ENCODE measurements at regions of chr5 and their contacts with region 1.

Region 1: DNA sequence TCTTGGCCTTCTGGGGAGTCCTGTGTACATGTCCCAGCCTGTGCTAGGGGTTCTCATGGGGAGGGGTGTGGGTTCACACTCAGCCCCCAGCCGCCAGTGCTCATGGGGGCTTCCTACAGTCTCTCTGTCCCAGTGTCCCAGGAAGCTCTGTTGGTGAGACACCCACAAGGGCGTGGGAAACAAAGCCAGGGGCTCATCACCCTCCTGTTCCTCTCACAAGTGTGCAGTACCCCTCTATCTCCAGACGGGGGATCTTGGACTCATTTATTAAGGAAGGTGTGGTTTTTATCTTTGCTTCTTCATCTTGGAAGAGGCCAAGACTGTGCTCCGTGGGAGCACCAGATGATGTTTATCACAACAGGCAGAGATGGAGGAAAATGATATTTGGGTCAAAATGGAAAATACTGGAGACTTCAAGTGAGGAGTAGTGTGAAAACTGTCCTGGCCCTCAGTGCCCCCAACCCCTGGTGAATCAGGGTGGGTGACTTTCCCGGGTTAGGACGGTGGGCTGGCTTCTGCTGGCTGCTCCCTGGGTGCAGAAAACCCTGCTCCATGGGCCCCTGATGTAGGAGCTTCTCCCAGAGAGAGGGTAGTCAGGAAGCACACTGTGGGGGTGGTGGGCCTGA is 15.2 kb downstream of the TMEM171 start:
- DNase-seq: no peak
- H3K4me3 ChIP-seq: no peak overlapping the region
- H3K27ac ChIP-seq: no peak overlapping the region
- H3K4me1 ChIP-seq: peaks cover 0 to 10% (median 3%) of the 10 kb centered on the region in 4 experiments; a peak in 3 of 7 replicates
- H3K27me3 ChIP-seq: no peaks in the 10 kb centered on the region; a peak in 1 of 7 replicates
- CTCF ChIP-seq: peak in 2 of 3 experiments; percentile 38 to 42; a peak in 2 of 4 replicates
- EP300 ChIP-seq: no peak
- POLR2A ChIP-seq: no peak
- RAD21 ChIP-seq: peak; percentile 41 to 49

Region 2: DNA sequence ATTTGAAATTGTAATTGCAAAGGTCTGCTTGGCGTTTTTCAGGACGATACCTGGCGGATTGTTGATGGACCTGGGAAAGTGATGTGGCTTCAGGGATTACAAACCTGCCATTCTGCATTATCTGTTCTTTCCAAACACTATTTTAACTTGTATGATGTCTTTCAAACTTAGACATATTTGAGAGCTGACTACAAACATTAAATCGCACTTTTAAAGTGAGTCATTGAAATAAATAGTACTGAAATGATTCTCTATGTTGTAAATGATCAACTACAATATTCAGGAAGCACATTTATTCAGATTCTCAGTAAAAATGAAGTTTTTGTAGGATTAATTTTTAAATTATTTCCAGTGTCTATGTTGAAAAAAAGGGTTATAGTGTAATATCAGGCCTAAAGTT is 47.5 kb before region 1 on chr5:
- CTCF ChIA-PET with region 1: interaction called, 11 read pairs
- POLR2A ChIA-PET with region 1: no interaction called
- DNase-seq: no peak
- H3K4me3 ChIP-seq: no peak overlapping the region
- H3K27ac ChIP-seq: no peak overlapping the region
- H3K4me1 ChIP-seq: no peaks in the 10 kb centered on the region
- H3K27me3 ChIP-seq: no peaks in the 10 kb centered on the region
- CTCF ChIP-seq: no peak
- EP300 ChIP-seq: no peak
- POLR2A ChIP-seq: no peak
- RAD21 ChIP-seq: no peak

Region 3: GRCh38 chr5:73122875-73123810 is 12.4 kb before region 1 on chr5:
- CTCF ChIA-PET with region 1: interaction called, 24 read pairs
- POLR2A ChIA-PET with region 1: interaction called, 7 read pairs
- DNase-seq: peak in 1 of 2 experiments; percentile 57
- H3K4me3 ChIP-seq: no peak overlapping the region
- H3K27ac ChIP-seq: no peak overlapping the region
- H3K4me1 ChIP-seq: peaks cover 0 to 3% (median 1%) of the 10 kb centered on the region in 4 experiments; a peak in 5 of 7 replicates
- H3K27me3 ChIP-seq: peaks cover 0 to 43% (median 30%) of the 10 kb centered on the region in 4 experiments; a peak in 6 of 7 replicates
- CTCF ChIP-seq: no peak
- EP300 ChIP-seq: no peak
- POLR2A ChIP-seq: no peak
- RAD21 ChIP-seq: no peak

Measured in H1 (cell line).